ENCODE measurements at regions of chr11 and their contacts with region 1.

Region 1: DNA sequence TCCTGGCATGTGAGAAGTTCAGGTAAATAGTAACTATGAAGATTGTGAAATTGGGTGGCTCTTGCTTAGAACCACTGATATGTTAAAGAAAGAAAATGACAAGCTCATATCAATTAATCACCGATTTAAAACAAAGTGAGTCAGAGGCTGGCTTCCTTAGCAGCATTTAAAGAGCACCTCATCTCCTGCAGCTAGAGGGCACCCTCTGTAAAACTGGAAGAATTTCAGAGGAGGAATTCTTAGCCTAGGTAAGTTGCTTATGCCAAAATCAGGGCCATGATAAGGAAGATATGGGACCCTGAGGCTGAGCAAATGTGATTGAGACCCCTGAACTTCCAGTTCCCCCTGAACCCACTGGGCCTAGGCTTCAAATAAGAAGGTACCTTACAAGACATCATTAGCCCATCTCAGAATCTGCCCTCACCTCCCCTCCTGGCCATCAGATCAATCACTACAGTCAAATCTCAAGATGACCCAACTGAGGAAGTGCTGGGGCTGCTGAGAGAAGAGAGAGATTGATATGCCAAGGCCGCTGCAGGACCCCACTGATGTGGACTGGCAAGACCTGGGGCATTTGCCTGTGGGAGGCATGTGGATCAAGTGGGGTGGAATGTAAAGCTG is 8.6 kb upstream of the CD3E start:
- DNase-seq: peak; percentile 76
- H3K4me3 Mint-ChIP-seq: no peak overlapping the region
- H3K27ac Mint-ChIP-seq: peak overlapping the region; percentile 8
- H3K4me1 Mint-ChIP-seq: peaks cover 15% of the 10 kb centered on the region
- H3K27me3 Mint-ChIP-seq: no peaks in the 10 kb centered on the region

Region 2: DNA sequence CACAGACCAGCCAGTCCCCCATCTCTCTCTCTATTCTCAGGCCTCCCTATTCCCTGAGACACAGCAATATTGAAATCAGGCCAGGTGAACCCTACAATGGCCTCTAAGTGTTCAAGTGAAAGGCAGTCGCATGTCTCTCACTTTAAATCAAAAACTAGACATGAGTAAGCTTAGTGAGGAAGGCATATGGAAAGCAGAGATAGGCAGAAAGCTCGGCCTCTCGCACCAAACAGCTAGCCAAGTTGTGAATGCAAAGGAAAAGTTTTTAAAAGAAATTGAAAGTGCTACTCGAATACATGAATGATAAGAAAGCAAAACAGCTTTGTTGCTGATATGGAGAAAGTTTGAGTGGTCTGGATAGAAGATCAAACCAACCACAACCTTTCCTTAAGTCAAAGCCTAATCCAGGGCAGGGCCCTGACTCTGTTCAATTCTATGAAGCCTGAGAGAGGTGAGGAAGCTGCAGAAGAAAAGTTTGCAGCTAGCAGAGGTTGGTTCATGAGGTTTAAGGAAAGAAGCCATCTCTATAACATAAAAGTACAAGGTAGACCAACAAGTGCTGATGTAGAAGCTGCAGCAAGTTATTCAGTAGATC is 12.1 kb before region 1 on chr11:
- CTCF ChIA-PET with region 1: interaction called, 13 read pairs
- intact Hi-C with region 1: no loop called
- DNase-seq: peak; percentile 55
- H3K4me3 Mint-ChIP-seq: no peak overlapping the region
- H3K27ac Mint-ChIP-seq: peak overlapping the region; percentile 75
- H3K4me1 Mint-ChIP-seq: peaks cover 51% of the 10 kb centered on the region
- H3K27me3 Mint-ChIP-seq: no peaks in the 10 kb centered on the region

Region 3: DNA sequence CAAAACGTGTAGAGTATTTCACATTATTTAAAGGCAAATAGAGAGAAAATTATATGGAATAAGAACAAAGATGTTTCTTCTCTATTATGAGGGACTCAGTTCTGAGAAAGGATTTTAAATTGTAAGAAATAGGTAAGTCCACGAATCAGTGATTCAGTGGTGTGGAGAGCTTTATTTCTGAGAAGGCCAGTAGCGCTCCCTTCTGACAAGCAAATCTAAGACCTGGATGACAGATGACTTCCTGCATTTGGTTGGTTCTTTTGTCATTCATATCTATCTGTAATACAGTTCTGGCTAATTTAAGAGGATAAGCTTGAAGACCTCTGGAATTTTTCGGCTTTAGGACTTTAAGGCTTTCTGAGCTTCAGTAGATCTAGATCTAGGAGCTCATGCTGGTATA is 15.6 kb after region 1 on chr11:
- CTCF ChIA-PET with region 1: interaction called, 22 read pairs
- intact Hi-C with region 1: no loop called
- DNase-seq: no peak
- H3K4me3 Mint-ChIP-seq: no peak overlapping the region
- H3K27ac Mint-ChIP-seq: peak overlapping the region; percentile 80
- H3K4me1 Mint-ChIP-seq: peaks cover 92% of the 10 kb centered on the region
- H3K27me3 Mint-ChIP-seq: no peaks in the 10 kb centered on the region

Region 4: DNA sequence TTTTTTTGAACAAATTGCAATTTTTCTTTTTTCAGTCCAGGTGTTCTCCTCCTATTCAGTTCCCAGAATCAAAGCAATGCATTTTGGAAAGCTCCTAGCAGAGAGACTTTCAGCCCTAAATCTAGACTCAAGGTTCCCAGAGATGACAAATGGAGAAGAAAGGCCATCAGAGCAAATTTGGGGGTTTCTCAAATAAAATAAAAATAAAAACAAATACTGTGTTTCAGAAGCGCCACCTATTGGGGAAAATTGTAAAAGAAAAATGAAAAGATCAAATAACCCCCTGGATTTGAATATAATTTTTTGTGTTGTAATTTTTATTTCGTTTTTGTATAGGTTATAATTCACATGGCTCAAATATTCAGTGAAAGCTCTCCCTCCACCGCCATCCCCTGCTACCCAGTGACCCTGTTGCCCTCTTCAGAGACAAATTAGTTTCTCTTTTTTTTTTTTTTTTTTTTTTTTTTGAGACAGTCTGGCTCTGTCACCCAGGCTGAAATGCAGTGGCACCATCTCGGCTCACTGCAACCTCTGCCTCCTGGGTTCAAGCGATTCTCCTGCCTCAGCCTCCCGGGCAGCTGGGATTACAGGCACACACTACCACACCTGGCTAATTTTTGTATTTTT is 57.3 kb after region 1 on chr11:
- CTCF ChIA-PET with region 1: interaction called, 46 read pairs
- intact Hi-C with region 1: loop called (anchors 1 kb)
- DNase-seq: no peak
- H3K4me3 Mint-ChIP-seq: no peak overlapping the region
- H3K27ac Mint-ChIP-seq: peak overlapping the region; percentile 80
- H3K4me1 Mint-ChIP-seq: peaks cover 24% of the 10 kb centered on the region
- H3K27me3 Mint-ChIP-seq: no peaks in the 10 kb centered on the region

Region 5: GRCh38 chr11:118488480-118489109 is 192.7 kb after region 1 on chr11:
- CTCF ChIA-PET with region 1: interaction called, 3 read pairs
- intact Hi-C with region 1: loop called (anchors 1 kb)
- DNase-seq: peak; percentile 92
- H3K4me3 Mint-ChIP-seq: no peak overlapping the region
- H3K27ac Mint-ChIP-seq: no peak overlapping the region
- H3K4me1 Mint-ChIP-seq: peaks cover 9% of the 10 kb centered on the region
- H3K27me3 Mint-ChIP-seq: no peaks in the 10 kb centered on the region

Region 6: DNA sequence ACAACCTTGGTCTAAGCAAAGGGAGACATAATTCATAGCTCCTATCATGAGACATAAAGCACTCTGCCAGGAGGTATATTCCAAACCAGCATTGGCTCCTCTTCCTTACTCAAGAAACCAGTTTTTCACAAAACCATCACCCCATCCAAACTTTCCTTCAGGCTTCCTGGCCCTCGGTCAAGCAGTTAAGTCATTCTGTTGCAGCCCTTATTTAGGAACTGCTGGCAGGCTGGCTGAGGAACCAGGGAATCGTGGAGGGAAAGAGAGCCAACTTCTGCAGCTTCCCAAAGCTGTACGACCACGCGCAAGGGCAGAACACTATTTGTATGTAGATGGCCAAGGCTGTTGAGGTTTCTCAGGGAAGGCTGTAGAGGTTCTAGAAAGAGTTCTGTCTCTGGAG is 269.1 kb after region 1 on chr11:
- CTCF ChIA-PET with region 1: interaction called, 3 read pairs
- intact Hi-C with region 1: loop called (anchors 1 kb)
- DNase-seq: no peak
- H3K4me3 Mint-ChIP-seq: peak overlapping the region; percentile 70
- H3K27ac Mint-ChIP-seq: no peak overlapping the region
- H3K4me1 Mint-ChIP-seq: peaks cover 24% of the 10 kb centered on the region
- H3K27me3 Mint-ChIP-seq: no peaks in the 10 kb centered on the region